ENCODE measurements at regions of chr18 and their contacts with region 1.

Region 1: GRCh38 chr18:48011926-48012465 is 81.5 kb upstream of the SMAD2 start:
- DNase-seq: no peak
- ATAC-seq: no peak
- H3K4me3 ChIP-seq: no peak overlapping the region
- H3K27ac ChIP-seq: no peak overlapping the region
- H3K4me1 ChIP-seq: peaks cover 0 to 14% of the 10 kb centered on the region in 2 experiments; a peak in 2 of 5 replicates
- H3K27me3 ChIP-seq: no peaks in the 10 kb centered on the region
- CTCF ChIP-seq: no peak
- EP300 ChIP-seq: no peak
- POLR2A ChIP-seq: no peak
- RAD21 ChIP-seq: no peak

Region 2: GRCh38 chr18:47953471-47953931 is 58.5 kb before region 1 on chr18:
- CTCF ChIA-PET with region 1: no interaction called
- POLR2A ChIA-PET with region 1: no interaction called
- in situ Hi-C with region 1: loop called (anchors 5 kb)
- intact Hi-C with region 1: no loop called
- DNase-seq: no peak
- ATAC-seq: no peak
- H3K4me3 ChIP-seq: no peak overlapping the region
- H3K27ac ChIP-seq: no peak overlapping the region
- H3K4me1 ChIP-seq: no peaks in the 10 kb centered on the region
- H3K27me3 ChIP-seq: peaks cover 2 to 4% of the 10 kb centered on the region in 2 experiments; a peak in 2 of 5 replicates
- CTCF ChIP-seq: no peak
- EP300 ChIP-seq: no peak
- POLR2A ChIP-seq: no peak
- RAD21 ChIP-seq: no peak

Region 3: GRCh38 chr18:48059455-48060010 is 47.5 kb after region 1 on chr18:
- CTCF ChIA-PET with region 1: no interaction called
- POLR2A ChIA-PET with region 1: no interaction called
- in situ Hi-C with region 1: no loop called
- intact Hi-C with region 1: no loop called
- DNase-seq: no peak
- ATAC-seq: no peak
- H3K4me3 ChIP-seq: no peak overlapping the region
- H3K27ac ChIP-seq: no peak overlapping the region
- H3K4me1 ChIP-seq: no peaks in the 10 kb centered on the region
- H3K27me3 ChIP-seq: peaks cover 2 to 32% of the 10 kb centered on the region in 2 experiments; a peak in 3 of 5 replicates
- CTCF ChIP-seq: no peak
- EP300 ChIP-seq: no peak
- POLR2A ChIP-seq: no peak
- RAD21 ChIP-seq: no peak

Measured in K562 (cell line).